Activated CD4-positive, alpha-beta memory T cell treated with anti-CD3 and anti-CD28 coated beads for 36 hours (primary cell): ENCODE measurements at regions of chr18 and their contacts with region 1.

Region 1: DNA sequence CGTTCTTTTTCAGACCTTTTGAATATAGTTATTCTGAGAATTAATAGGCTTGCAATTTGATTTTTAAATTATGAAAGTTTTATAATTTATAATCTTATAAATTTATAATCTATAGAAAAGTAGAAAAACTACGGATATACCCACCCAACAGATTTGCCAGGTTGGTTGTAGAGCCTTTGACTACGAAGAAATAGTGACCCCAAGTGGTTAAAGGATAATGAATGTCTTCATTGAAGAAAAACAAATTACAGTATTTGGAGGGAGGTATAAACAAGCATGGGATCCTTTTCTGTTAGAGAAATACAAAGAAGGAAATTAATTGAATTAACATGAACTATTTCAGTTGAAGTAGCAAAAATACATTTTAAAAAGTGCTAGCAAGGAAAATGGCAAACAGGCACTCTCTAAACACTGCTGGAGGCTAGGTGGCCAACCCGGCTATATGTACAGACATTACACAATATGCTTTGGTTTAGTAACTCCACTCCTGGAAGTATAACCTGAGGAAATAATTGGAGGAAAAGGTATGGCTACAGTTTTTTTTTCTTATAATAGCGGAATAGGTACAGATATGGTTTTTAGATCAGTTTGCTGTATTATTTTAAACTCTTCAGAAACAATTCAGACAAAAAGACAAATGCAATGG is 110.9 kb downstream of the MIB1 start:
- DNase-seq: no peak
- H3K4me3 Mint-ChIP-seq: no peak overlapping the region
- H3K27ac Mint-ChIP-seq: no peak overlapping the region
- H3K4me1 Mint-ChIP-seq: peaks cover 6% of the 10 kb centered on the region
- H3K27me3 Mint-ChIP-seq: no peaks in the 10 kb centered on the region

Region 2: GRCh38 chr18:21489119-21489750 is 362.2 kb before region 1 on chr18:
- CTCF ChIA-PET with region 1: no interaction called
- POLR2A ChIA-PET with region 1: no interaction called
- intact Hi-C with region 1: loop called (anchors 1 kb)
- DNase-seq: peak; percentile 41
- H3K4me3 Mint-ChIP-seq: no peak overlapping the region
- H3K27ac Mint-ChIP-seq: no peak overlapping the region
- H3K4me1 Mint-ChIP-seq: no peaks in the 10 kb centered on the region
- H3K27me3 Mint-ChIP-seq: peaks cover 2% of the 10 kb centered on the region

Region 3: DNA sequence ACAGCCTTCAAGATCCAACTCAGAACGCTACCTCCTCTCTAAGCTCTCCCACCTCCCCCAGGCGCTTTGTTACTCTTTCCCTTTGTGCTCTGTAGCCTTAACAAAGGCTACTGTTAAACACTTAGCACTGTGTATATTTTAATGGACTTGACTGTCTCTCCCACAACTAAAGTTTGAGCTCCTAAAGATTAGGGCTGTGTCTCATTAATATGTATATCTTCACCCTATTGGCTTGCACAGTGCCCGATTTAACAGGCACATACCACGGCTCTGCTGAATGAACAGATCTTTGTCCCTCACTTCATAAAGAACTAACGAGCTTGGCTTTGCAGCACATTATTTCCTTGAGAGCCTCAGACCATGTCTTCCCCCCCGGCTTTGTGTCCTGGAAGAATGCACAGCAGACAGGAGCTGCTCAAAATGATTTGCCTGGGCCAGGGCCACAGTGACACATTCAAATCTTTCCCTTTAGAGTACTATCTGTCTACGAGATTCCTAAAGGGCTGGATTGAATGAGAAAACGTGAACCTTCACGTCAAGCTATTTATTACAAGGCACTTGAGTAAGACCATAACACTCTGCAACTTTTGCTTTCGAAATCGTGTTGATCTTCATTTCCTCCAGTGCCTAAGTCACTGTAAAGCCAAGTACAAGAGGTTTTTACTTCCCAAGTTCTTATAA is 168.9 kb before region 1 on chr18:
- CTCF ChIA-PET with region 1: interaction called, 7 read pairs
- POLR2A ChIA-PET with region 1: no interaction called
- intact Hi-C with region 1: loop called (anchors 10 kb)
- DNase-seq: peak; percentile 36
- H3K4me3 Mint-ChIP-seq: no peak overlapping the region
- H3K27ac Mint-ChIP-seq: no peak overlapping the region
- H3K4me1 Mint-ChIP-seq: peaks cover 25% of the 10 kb centered on the region
- H3K27me3 Mint-ChIP-seq: no peaks in the 10 kb centered on the region